Lower lobe of right lung (tissue), 2 donors: ENCODE measurements at regions of chr22 and their contacts with region 1.

Region 1: DNA sequence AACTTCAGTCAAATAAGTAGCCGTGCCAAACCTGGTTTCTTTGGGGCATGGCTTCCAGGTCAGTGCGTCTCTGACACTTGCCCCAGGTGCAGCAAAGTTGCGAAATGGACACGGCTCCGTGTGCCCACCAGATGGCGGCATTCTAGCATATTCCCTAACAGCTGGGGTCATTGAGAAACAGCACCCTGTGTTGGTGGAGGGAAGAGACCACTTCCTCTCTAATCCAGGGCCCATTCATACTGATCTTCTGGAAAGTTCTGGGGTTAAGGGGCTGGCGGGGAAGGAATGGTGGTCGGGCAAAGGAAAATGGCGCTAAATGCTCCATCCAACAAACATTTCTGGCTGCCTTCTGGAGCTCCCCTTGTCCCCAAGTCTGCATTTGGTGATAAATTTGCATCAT is 141.2 kb upstream of the TIMP3 start:
- DNase-seq: peak; percentile 69
- ATAC-seq: peak; percentile 82 to 86
- H3K4me3 ChIP-seq: no peak overlapping the region
- H3K27ac ChIP-seq: no peak overlapping the region
- H3K4me1 ChIP-seq: peaks cover 10% of the 10 kb centered on the region
- H3K27me3 ChIP-seq: no peaks in the 10 kb centered on the region
- CTCF ChIP-seq: peak; percentile 78

Region 2: GRCh38 chr22:32796865-32797573 is 136.7 kb after region 1 on chr22:
- intact Hi-C with region 1: loop called (anchors 10 kb)
- DNase-seq: peak; percentile 71
- ATAC-seq: peak; percentile 75 to 82
- H3K4me3 ChIP-seq: no peak overlapping the region
- H3K27ac ChIP-seq: no peak overlapping the region
- H3K4me1 ChIP-seq: peaks cover 23% of the 10 kb centered on the region
- H3K27me3 ChIP-seq: peaks cover 10% of the 10 kb centered on the region
- CTCF ChIP-seq: peak; percentile 88